Activated CD4-positive, alpha-beta T cell treated with anti-CD3 and anti-CD28 coated beads for 36 hours (primary cell): ENCODE measurements at regions of chr1 and their contacts with region 1.

Region 1: GRCh38 chr1:111755331-111756123 is at the start of gene DDX20:
- DNase-seq: peak; percentile 97
- ATAC-seq: peak; percentile 90
- H3K4me3 Mint-ChIP-seq: peak within 1 kb of the TSS; percentile 83
- H3K27ac Mint-ChIP-seq: peak within 1 kb of the TSS; percentile 98
- H3K4me1 Mint-ChIP-seq: peaks cover 35% of the 10 kb centered on the region
- H3K27me3 Mint-ChIP-seq: no peaks in the 10 kb centered on the region
- total RNA-seq, gene DDX20: 13.5 to 13.6 TPM

Region 2: GRCh38 chr1:110963691-110964399 is 791.7 kb before region 1 on chr1 and contains the start of gene LRIF1:
- CTCF ChIA-PET with region 1: no interaction called
- POLR2A ChIA-PET with region 1: no interaction called
- intact Hi-C with region 1: loop called in 1 of 2 experiments (anchors 2 kb)
- DNase-seq: peak; percentile 100
- ATAC-seq: peak; percentile 99
- H3K4me3 Mint-ChIP-seq: peak within 1 kb of the TSS; percentile 78
- H3K27ac Mint-ChIP-seq: peak within 1 kb of the TSS; percentile 94
- H3K4me1 Mint-ChIP-seq: peaks cover 30% of the 10 kb centered on the region
- H3K27me3 Mint-ChIP-seq: peaks cover 7% of the 10 kb centered on the region
- total RNA-seq, gene LRIF1: 15.1 to 15.4 TPM

Region 3: DNA sequence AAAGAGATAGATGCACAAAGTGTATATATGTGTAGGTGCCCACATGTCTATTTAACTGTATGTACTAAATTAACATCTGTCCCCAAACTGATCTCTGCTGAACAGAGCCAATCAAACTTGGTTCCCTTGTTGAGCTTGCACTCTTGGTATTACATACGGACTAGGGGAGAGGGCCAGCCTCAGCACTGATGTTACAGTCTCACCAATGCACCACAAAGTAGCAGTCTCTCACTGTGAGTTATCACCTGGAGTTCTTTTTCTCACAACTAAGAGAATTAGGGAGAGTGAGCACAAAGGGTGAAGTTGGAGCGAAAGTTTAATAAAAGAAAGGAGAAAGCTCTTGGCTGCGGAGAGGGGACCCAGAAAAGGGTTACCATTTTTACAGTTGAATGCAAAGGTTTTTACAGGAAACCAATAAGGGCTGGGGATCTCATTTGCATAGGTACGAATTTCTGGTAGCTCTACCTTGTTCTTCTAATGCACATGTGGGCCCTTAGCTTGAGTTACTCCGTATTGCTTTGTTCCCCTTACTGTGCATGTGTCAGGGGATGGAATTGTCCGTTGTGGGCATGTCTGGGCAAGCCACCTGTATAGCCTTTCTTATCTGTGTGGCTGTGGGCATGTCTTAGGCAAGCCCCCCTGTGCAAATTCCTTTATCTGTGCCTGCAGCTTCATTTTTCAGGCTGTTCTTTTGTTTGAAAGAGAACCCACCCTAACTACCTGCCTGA is 541.3 kb before region 1 on chr1:
- CTCF ChIA-PET with region 1: no interaction called
- POLR2A ChIA-PET with region 1: no interaction called
- intact Hi-C with region 1: loop called in 1 of 2 experiments (anchors 2 kb)
- DNase-seq: no peak
- ATAC-seq: peak; percentile 18
- H3K4me3 Mint-ChIP-seq: peak overlapping the region; percentile 68
- H3K27ac Mint-ChIP-seq: peak overlapping the region; percentile 97
- H3K4me1 Mint-ChIP-seq: peaks cover 80% of the 10 kb centered on the region
- H3K27me3 Mint-ChIP-seq: no peaks in the 10 kb centered on the region

Region 4: DNA sequence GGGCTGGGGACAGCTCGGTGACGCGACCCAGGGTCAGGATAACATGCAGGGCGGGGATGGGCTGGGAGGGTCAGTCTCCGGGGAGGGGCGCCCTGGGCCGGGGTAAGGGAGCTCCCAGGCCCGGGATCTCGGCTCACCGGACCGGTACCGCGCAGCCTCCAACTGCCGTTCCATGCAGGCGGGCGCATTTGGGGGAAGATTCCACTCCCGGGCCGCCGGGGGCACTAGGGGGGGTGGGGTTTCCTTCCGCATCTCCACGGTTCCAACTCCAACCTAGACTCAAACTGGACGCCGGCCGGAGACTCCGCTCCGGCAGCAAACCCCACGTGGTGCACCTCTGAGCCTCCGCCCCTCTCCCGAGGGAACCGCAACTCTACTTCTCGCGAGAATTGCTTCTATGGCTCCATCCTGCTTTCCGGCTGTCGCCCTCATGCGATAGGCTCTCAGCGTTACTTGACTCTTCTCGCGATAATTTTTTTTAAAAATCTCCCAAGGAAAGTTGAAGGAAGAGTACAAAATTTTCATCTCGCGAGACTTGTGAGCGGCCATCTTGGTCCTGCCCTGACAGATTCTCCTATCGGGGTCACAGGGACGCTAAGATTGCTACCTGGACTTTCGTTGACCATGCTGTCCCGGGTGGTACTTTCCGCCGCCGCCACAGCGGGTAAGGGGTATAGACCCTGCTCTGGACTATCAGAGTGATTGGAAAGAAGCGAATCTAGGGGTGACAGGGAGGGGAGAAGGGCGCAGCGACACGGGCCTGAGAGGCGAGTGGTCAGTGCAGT is 306.4 kb before region 1 on chr1 and contains the starts of genes ATP5PB and WDR77:
- CTCF ChIA-PET with region 1: interaction called, 4 read pairs
- POLR2A ChIA-PET with region 1: no interaction called
- intact Hi-C with region 1: loop called (anchors 1 kb)
- DNase-seq: peak; percentile 94
- ATAC-seq: peak; percentile 98
- H3K4me3 Mint-ChIP-seq: peak within 1 kb of the TSS; percentile 99
- H3K27ac Mint-ChIP-seq: peak within 1 kb of the TSS; percentile 98
- H3K4me1 Mint-ChIP-seq: peaks cover 79% of the 10 kb centered on the region
- H3K27me3 Mint-ChIP-seq: no peaks in the 10 kb centered on the region
- total RNA-seq, gene ATP5PB: 292 to 301 TPM
- total RNA-seq, gene WDR77: 42.5 to 53.6 TPM

Region 5: DNA sequence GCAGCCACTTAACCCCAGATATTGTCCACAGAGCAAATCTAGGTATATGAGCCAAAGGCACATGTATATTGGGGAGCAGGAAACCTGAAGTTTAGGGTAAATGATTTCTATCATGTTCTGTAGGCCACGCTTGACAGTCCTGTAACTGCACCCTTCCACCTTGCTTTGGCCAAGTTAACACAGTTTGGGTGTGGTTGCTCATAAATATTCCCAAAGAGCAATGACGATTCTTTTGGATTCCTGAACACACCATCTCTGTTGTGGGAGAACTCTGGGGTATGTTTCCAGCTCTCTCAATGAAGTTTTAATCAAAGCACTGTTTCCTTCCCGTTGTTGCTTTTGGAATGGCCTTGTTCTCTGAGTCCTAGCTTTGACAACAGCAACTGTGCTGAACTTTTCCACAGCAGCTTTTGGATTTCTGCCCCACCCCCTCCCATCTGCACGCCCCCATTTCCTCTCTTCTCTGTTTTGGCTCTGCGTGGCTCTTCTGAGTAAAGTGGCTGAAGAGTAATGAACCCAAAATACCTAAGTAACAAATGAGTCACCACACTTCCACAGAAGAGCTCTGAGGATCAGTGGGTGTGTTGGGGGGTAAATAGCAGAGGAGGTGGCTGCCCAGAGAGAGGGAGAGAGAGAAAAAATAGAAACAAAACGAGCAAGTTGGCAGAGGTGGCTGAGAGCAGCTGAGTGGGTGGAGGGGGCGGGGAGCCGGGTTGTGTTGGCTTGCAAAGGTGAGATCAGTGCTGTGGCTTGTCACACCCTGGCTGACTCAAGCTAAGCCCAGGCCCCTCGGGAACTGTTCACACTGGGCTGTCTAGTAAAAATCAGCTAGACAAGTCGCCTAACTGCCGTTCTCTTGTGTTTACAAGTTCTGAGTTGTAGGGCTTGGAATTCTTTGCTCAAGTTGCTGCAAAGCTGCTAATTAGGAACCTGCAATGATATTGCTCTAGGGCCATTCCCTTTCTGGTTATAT is 162.9 kb before region 1 on chr1:
- CTCF ChIA-PET with region 1: interaction called, 3 read pairs
- POLR2A ChIA-PET with region 1: no interaction called
- intact Hi-C with region 1: loop called in 1 of 2 experiments (anchors 2 kb)
- DNase-seq: peak; percentile 98
- ATAC-seq: peak; percentile 93
- H3K4me3 Mint-ChIP-seq: peak overlapping the region; percentile 63
- H3K27ac Mint-ChIP-seq: peak overlapping the region; percentile 95
- H3K4me1 Mint-ChIP-seq: peaks cover 73% of the 10 kb centered on the region
- H3K27me3 Mint-ChIP-seq: no peaks in the 10 kb centered on the region

Region 6: DNA sequence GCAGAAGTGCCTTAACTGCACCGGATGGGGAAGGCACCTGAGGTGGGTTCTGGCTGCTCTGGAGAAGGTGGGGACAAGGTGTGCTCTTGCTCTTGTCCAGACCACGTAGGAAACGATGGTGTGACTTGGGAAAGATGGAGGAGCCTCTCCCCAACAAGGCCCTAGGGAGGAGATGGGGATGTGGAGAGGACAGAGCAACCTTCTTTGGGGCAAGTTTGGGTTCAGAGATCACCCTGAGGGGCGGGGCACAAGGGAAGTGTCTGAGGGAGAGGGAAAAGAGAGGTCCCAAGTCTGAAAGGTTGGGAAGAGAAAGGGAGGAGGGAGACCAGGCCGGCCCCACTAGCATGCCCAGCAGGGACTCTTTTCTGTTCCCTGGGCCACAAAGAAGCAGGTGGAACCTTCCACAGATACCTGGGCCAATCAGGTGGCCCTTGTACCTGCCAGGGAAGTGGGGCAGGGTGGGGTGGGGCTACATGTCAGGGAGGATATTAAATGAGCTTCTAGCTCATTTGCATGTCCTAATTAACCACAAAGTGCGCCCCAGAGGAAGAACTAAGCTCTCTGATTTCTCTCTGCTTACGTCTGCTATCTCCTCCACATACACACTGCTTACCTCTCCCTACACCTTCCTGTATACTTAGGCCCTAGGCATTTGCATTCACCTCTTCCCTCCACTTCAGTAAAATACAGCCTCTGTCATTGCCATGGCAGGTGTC is 32.3 kb before region 1 on chr1:
- CTCF ChIA-PET with region 1: no interaction called
- POLR2A ChIA-PET with region 1: no interaction called
- intact Hi-C with region 1: no loop called
- DNase-seq: no peak
- ATAC-seq: no peak
- H3K4me3 Mint-ChIP-seq: no peak overlapping the region
- H3K27ac Mint-ChIP-seq: peak overlapping the region; percentile 4
- H3K4me1 Mint-ChIP-seq: peaks cover 12% of the 10 kb centered on the region
- H3K27me3 Mint-ChIP-seq: no peaks in the 10 kb centered on the region

Region 7: DNA sequence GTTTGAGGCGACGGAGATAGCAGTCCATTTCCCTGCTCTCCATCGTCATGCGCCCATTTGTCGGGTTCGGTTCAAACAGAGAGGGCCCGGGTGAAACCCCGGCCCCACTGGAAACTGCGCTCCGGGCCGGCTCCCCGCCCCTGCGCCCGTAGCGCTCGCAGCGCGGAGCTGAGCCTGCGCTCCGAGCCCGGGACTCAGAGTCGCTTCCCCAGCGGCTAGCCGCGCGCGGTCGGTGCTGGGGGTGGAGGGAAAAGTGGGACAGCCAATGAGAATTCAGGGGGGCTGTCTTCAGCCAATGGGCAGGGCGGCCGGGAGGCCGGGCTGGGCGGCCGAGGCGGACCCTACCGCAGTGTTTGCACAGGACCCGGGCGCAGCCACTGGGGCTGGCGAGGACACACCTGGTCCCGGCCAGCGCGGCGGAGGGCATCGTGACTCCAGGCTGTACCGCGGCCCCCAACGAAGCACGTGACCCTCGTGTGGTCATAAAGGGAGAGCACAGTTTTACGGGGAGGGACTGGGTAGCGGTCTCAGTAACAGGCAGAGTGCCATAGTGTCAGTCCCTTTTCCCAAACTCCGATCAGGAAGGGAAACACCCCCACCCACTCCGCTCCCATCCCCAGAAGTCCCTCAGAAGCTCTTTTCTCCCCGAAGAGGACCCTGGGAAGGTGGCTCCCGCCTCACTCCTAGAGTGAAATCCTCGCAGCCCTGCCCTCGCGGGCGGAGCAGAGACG is 16.2 kb before region 1 on chr1 and contains the start of gene INKA2:
- CTCF ChIA-PET with region 1: interaction called, 10 read pairs
- POLR2A ChIA-PET with region 1: interaction called, 3 read pairs
- intact Hi-C with region 1: loop called (anchors 1 to 2 kb)
- DNase-seq: peak; percentile 89
- ATAC-seq: peak; percentile 87
- H3K4me3 Mint-ChIP-seq: peak within 1 kb of the TSS; percentile 80
- H3K27ac Mint-ChIP-seq: peak within 1 kb of the TSS; percentile 11
- H3K4me1 Mint-ChIP-seq: peaks cover 15% of the 10 kb centered on the region
- H3K27me3 Mint-ChIP-seq: peaks cover 32% of the 10 kb centered on the region
- total RNA-seq, gene INKA2: 0.25 to 0.49 TPM

Region 8: GRCh38 chr1:111801071-111801841 is 45.7 kb after region 1 on chr1:
- CTCF ChIA-PET with region 1: no interaction called
- POLR2A ChIA-PET with region 1: no interaction called
- intact Hi-C with region 1: no loop called
- DNase-seq: no peak
- ATAC-seq: no peak
- H3K4me3 Mint-ChIP-seq: no peak overlapping the region
- H3K27ac Mint-ChIP-seq: no peak overlapping the region
- H3K4me1 Mint-ChIP-seq: no peaks in the 10 kb centered on the region
- H3K27me3 Mint-ChIP-seq: peaks cover 2% of the 10 kb centered on the region

Region 9: GRCh38 chr1:111990878-111991718 is 235.6 kb after region 1 on chr1:
- CTCF ChIA-PET with region 1: no interaction called
- POLR2A ChIA-PET with region 1: no interaction called
- intact Hi-C with region 1: no loop called
- DNase-seq: peak; percentile 20
- ATAC-seq: peak; percentile 33
- H3K4me3 Mint-ChIP-seq: peak overlapping the region; percentile 49
- H3K27ac Mint-ChIP-seq: no peak overlapping the region
- H3K4me1 Mint-ChIP-seq: peaks cover 11% of the 10 kb centered on the region
- H3K27me3 Mint-ChIP-seq: peaks cover 69% of the 10 kb centered on the region